ENCODE measurements at regions of chr20 and their contacts with region 1.

Region 1: DNA sequence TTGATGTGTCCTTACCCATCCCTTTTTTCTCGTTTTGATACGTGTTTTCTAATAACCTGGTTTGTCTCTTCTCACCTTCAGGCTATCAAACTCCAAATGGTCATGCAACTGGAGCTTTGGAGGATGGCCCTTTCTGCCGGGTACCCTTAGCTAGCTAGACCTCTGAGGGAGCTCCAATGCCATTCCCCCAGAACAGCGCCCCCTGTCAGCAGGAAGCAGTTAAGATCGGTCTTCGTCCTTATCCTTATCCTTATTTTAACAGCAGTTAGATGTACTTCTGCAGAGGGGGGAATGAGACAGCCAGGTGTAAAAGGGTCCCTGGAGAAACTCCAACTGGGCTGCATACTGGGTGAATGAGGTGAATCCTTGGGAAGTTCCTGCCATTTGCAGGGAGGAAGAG is 37.2 kb downstream of the SEL1L2 start:
- DNase-seq: peak; percentile 68
- ATAC-seq: peak; percentile 95
- H3K4me3 Mint-ChIP-seq: no peak overlapping the region
- H3K27ac Mint-ChIP-seq: no peak overlapping the region
- H3K4me1 Mint-ChIP-seq: peaks cover 2% of the 10 kb centered on the region; the same call in 1 of the 2 replicates
- H3K27me3 Mint-ChIP-seq: no peaks in the 10 kb centered on the region; the same call in 1 of the 2 replicates
- CTCF ChIP-seq: peak; percentile 62

Region 2: DNA sequence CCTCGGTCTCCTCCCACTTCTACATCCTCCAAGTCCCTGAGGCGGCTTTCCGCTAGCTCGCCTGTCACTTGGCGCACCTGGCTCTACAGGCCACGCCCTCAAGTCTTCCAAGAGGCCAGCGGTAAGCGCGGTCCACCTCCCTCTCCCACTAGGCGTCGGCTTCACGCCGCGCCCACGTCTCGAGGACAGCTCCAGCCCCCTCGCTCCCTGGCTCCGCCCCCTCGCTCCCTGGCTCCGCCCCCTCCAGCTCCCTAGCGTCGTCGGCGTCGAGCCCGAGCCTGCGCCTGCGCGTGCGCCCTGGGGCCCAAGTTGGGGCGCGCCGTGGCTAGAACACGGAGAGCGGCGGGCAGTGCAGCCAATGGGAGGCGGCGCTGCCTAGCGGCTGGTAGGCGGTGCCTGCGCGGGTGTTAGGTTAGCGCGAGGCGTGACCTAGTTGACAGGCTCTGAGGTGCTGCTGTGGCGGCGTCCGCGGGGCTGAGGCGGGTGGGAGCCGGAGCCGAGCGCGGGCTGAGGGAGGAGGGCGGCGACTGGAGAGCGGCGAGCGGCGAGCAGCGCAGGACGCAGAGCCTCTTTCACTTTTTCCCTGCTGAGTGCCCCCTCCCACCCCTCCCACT is 42.0 kb after region 1 on chr20 and contains the start of gene MACROD2:
- CTCF ChIA-PET with region 1: interaction called, 22 read pairs
- POLR2A ChIA-PET with region 1: no interaction called
- DNase-seq: peak; percentile 98
- ATAC-seq: peak; percentile 93
- H3K4me3 Mint-ChIP-seq: peak within 1 kb of the TSS; percentile 90
- H3K27ac Mint-ChIP-seq: peak within 1 kb of the TSS; percentile 32; the same call in 1 of the 2 replicates
- H3K4me1 Mint-ChIP-seq: peaks cover 16% of the 10 kb centered on the region
- H3K27me3 Mint-ChIP-seq: peaks cover 17% of the 10 kb centered on the region
- CTCF ChIP-seq: no peak
- total RNA-seq, gene MACROD2: 3.0 to 4.1 TPM (median 3.5 TPM) in 3 replicates

Region 3: GRCh38 chr20:14055127-14055742 is 102.0 kb after region 1 on chr20:
- CTCF ChIA-PET with region 1: interaction called, 10 read pairs
- POLR2A ChIA-PET with region 1: no interaction called
- DNase-seq: no peak
- ATAC-seq: 0 out of 2 replicates have a peak, but pooled peaks have one; percentile 28
- H3K4me3 Mint-ChIP-seq: no peak overlapping the region
- H3K27ac Mint-ChIP-seq: no peak overlapping the region
- H3K4me1 Mint-ChIP-seq: peaks cover 5% of the 10 kb centered on the region
- H3K27me3 Mint-ChIP-seq: no peaks in the 10 kb centered on the region
- CTCF ChIP-seq: 0 out of 2 replicates have a peak, but pooled peaks have one; percentile 30

Region 4: GRCh38 chr20:15240801-15241200 is 1287.6 kb after region 1 on chr20:
- CTCF ChIA-PET with region 1: no interaction called
- POLR2A ChIA-PET with region 1: no interaction called
- DNase-seq: no peak
- ATAC-seq: no peak
- H3K4me3 Mint-ChIP-seq: no peak overlapping the region
- H3K27ac Mint-ChIP-seq: no peak overlapping the region
- H3K4me1 Mint-ChIP-seq: peaks cover 2% of the 10 kb centered on the region; the same call in 1 of the 2 replicates
- H3K27me3 Mint-ChIP-seq: no peaks in the 10 kb centered on the region
- CTCF ChIP-seq: no peak

Measured in WTC11 (cell line).